IMR-90 (cell line): ENCODE measurements at regions of chr5 and their contacts with region 1.

Region 1: GRCh38 chr5:59724482-59725391 is 168.8 kb downstream of the PDE4D start:
- DNase-seq: peak; percentile 36
- ATAC-seq: peak; percentile 89
- H3K4me3 ChIP-seq: no peak overlapping the region
- H3K27ac ChIP-seq: peak overlapping the region; percentile 52
- H3K4me1 ChIP-seq: no peaks in the 10 kb centered on the region
- H3K27me3 ChIP-seq: no peaks in the 10 kb centered on the region
- CTCF ChIP-seq: peak; percentile 52
- POLR2A ChIP-seq: no peak
- RAD21 ChIP-seq: peak; percentile 49

Region 2: GRCh38 chr5:58912116-58912515 is 812.6 kb before region 1 on chr5:
- CTCF ChIA-PET with region 1: no interaction called
- POLR2A ChIA-PET with region 1: no interaction called
- dilution Hi-C with region 1: no loop called
- in situ Hi-C with region 1: no loop called
- intact Hi-C with region 1: no loop called
- DNase-seq: no peak
- ATAC-seq: no peak
- H3K4me3 ChIP-seq: no peak overlapping the region
- H3K27ac ChIP-seq: no peak overlapping the region
- H3K4me1 ChIP-seq: no peaks in the 10 kb centered on the region
- H3K27me3 ChIP-seq: peaks cover 2% of the 10 kb centered on the region; the same call in 1 of the 2 replicates
- CTCF ChIP-seq: no peak
- POLR2A ChIP-seq: no peak
- RAD21 ChIP-seq: no peak

Region 3: GRCh38 chr5:59390074-59390659 is 334.6 kb before region 1 on chr5:
- CTCF ChIA-PET with region 1: no interaction called
- POLR2A ChIA-PET with region 1: no interaction called
- dilution Hi-C with region 1: no loop called
- in situ Hi-C with region 1: no loop called
- intact Hi-C with region 1: loop called (anchors 5 kb)
- DNase-seq: peak; percentile 20
- ATAC-seq: no peak
- H3K4me3 ChIP-seq: no peak overlapping the region
- H3K27ac ChIP-seq: no peak overlapping the region
- H3K4me1 ChIP-seq: no peaks in the 10 kb centered on the region
- H3K27me3 ChIP-seq: 0 out of 2 replicates have a peak, but pooled peaks cover 2% of the 10 kb centered on the region
- CTCF ChIP-seq: peak; percentile 64
- POLR2A ChIP-seq: no peak
- RAD21 ChIP-seq: peak; percentile 52

Region 4: GRCh38 chr5:59506285-59506877 is 218.4 kb before region 1 on chr5:
- CTCF ChIA-PET with region 1: no interaction called
- POLR2A ChIA-PET with region 1: no interaction called
- dilution Hi-C with region 1: no loop called
- in situ Hi-C with region 1: no loop called
- intact Hi-C with region 1: loop called (anchors 1 kb)
- DNase-seq: peak; percentile 28
- ATAC-seq: no peak
- H3K4me3 ChIP-seq: no peak overlapping the region
- H3K27ac ChIP-seq: no peak overlapping the region
- H3K4me1 ChIP-seq: no peaks in the 10 kb centered on the region
- H3K27me3 ChIP-seq: no peaks in the 10 kb centered on the region
- CTCF ChIP-seq: peak; percentile 54
- POLR2A ChIP-seq: no peak
- RAD21 ChIP-seq: peak; percentile 57

Region 5: GRCh38 chr5:59673438-59674058 is 51.2 kb before region 1 on chr5:
- CTCF ChIA-PET with region 1: interaction called, 3 read pairs
- POLR2A ChIA-PET with region 1: no interaction called
- dilution Hi-C with region 1: no loop called
- in situ Hi-C with region 1: no loop called
- intact Hi-C with region 1: loop called (anchors 2 kb)
- DNase-seq: peak; percentile 49
- ATAC-seq: peak; percentile 60
- H3K4me3 ChIP-seq: no peak overlapping the region
- H3K27ac ChIP-seq: no peak overlapping the region
- H3K4me1 ChIP-seq: no peaks in the 10 kb centered on the region
- H3K27me3 ChIP-seq: no peaks in the 10 kb centered on the region
- CTCF ChIP-seq: peak; percentile 78
- POLR2A ChIP-seq: no peak
- RAD21 ChIP-seq: peak; percentile 71

Region 6: GRCh38 chr5:59749782-59750520 is 25.2 kb after region 1 on chr5:
- CTCF ChIA-PET with region 1: no interaction called
- POLR2A ChIA-PET with region 1: interaction called, 17 read pairs
- dilution Hi-C with region 1: no loop called
- in situ Hi-C with region 1: no loop called
- intact Hi-C with region 1: no loop called
- DNase-seq: no peak
- ATAC-seq: no peak
- H3K4me3 ChIP-seq: no peak overlapping the region
- H3K27ac ChIP-seq: no peak overlapping the region
- H3K4me1 ChIP-seq: no peaks in the 10 kb centered on the region
- H3K27me3 ChIP-seq: no peaks in the 10 kb centered on the region
- CTCF ChIP-seq: no peak
- POLR2A ChIP-seq: no peak
- RAD21 ChIP-seq: no peak

Region 7: DNA sequence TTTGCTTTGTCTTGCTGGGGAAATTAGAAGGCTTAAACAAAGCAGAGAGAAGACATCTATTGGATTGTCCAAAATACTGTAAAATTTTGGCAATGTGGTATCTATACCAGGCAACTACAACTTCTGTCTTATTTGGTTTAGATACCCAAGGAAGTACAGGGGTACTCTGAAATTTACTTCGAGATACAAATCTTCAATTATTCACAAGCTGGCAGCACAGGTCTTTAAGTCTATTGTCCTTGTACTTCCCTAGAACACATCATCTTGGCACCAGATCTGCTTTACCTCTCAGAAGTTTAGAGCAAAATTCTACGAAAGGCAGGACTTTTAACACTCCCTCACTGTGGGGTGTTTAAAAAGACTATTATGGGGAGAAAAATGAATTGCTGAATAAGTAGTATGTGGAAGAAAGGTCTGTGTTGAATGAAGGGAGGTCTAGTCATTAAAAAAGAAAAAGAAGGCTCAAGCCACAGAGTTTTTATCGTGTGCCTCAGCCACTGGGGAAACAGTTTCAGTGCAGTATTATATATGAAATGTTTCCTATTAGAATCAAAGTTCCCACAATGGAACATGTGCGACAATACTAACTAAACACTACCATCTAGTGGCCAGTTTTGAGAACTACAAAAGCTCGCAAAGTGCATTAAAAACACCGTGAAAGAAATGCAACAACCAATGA is 75.1 kb after region 1 on chr5:
- CTCF ChIA-PET with region 1: interaction called, 3 read pairs
- POLR2A ChIA-PET with region 1: no interaction called
- dilution Hi-C with region 1: no loop called
- in situ Hi-C with region 1: no loop called
- intact Hi-C with region 1: loop called (anchors 1 kb)
- DNase-seq: peak; percentile 57
- ATAC-seq: peak; percentile 81
- H3K4me3 ChIP-seq: no peak overlapping the region
- H3K27ac ChIP-seq: no peak overlapping the region
- H3K4me1 ChIP-seq: no peaks in the 10 kb centered on the region
- H3K27me3 ChIP-seq: no peaks in the 10 kb centered on the region; the same call in none of the 2 replicates
- CTCF ChIP-seq: peak; percentile 83
- POLR2A ChIP-seq: no peak
- RAD21 ChIP-seq: peak; percentile 78